CD8-positive, alpha-beta T cell (primary cell): ENCODE measurements at regions of chr1 and their contacts with region 1.

Region 1: DNA sequence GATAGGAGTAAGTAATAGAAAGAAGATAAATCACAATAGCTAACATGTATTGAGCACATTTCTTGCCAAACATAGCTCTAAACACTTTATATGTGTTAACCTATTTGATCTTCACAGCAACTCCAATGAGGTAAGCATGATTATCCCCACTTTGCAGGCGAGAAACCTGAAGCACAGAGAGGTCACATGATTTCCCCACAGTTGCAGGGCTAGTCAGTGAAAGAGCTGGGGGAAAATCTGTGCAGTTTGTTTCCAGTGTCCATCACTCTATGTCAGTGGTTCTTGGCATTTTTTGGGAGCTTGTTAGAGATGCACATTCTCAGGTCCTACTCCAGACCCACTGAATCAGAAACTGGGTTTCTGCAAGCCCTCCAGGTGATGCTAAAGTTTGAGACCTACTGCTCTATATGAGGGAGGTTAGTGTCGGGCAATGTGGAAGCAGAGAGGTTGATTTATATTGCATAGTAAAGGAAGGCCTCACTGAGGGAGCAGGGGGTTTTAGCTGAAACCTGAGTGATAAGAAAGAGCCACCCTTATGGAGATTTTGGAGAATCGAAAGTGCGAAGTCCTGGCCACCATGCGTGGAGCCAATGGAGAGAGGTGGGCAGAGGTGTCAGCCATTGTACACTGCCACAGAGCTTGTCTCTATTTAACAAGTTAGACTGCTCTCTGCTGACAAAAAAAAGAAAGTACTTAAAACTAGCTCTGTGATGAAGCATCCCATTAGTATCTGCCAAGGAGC is 20.9 kb downstream of the MCOLN3 start:
- DNase-seq: peak in 6 of 9 experiments; percentile 21 to 80 (median 52)
- ATAC-seq: peak; percentile 92
- H3K4me3 ChIP-seq: peak overlapping the region; percentile 10 to 42
- H3K4me3 Mint-ChIP-seq: peak overlapping the region; percentile 74
- H3K27ac ChIP-seq: peak overlapping the region in 1 of 2 experiments; percentile 60
- H3K27ac Mint-ChIP-seq: peak overlapping the region; percentile 86
- H3K4me1 ChIP-seq: peaks cover 8% of the 10 kb centered on the region
- H3K4me1 Mint-ChIP-seq: peaks cover 10% of the 10 kb centered on the region
- H3K27me3 ChIP-seq: no peaks in the 10 kb centered on the region
- H3K27me3 Mint-ChIP-seq: no peaks in the 10 kb centered on the region
- CTCF ChIP-seq: peak; percentile 30

Region 2: GRCh38 chr1:84425150-84425896 is 602.1 kb before region 1 on chr1:
- CTCF ChIA-PET with region 1: no interaction called
- POLR2A ChIA-PET with region 1: no interaction called
- intact Hi-C with region 1: no loop called
- DNase-seq: no peak
- ATAC-seq: no peak
- H3K4me3 ChIP-seq: no peak overlapping the region
- H3K4me3 Mint-ChIP-seq: no peak overlapping the region
- H3K27ac ChIP-seq: no peak overlapping the region
- H3K27ac Mint-ChIP-seq: no peak overlapping the region
- H3K4me1 ChIP-seq: no peaks in the 10 kb centered on the region
- H3K4me1 Mint-ChIP-seq: no peaks in the 10 kb centered on the region
- H3K27me3 ChIP-seq: no peaks in the 10 kb centered on the region
- H3K27me3 Mint-ChIP-seq: peaks cover under 1% of the 10 kb centered on the region
- CTCF ChIP-seq: no peak

Region 3: DNA sequence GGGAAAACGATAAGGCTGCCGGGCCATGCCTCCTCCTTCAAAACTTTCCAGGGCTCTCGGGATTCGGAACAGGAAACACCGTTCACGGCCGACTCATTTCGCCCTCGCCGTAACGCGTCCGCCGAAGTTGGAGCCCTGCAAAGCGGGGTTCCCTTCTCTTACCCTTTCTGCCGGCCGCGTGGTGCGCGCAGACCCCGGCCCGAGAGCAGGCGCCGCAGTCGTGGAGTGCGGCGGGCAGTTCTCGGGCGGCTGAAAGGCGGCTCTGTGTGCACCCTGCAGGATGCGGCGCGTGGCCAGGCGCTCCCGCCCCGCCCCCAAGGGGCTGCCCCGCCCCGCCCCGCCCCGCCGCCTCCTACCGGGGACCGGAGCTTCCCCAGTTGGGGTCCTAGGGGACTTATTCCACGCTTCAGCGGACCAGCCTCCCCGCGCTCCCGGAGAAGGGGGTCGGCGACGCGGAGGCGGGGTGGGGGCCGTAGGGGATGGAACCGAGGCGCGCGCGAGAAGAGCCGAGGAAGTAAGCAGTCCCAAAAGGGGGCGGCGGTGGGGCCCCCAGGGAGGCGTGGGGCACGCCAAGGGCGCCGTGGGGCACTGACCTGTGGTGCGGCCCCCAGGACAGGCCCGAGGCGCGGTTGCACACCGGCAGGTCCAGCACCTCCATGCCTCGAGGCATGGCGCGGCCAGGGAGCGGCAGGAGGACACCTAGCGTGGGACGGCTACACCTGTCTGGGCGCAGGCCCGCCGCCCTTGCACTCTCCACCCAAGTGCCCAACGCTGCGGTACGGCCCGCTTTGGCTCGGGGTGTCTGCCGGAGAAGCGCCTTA is 30.4 kb before region 1 on chr1 and contains the start of gene MCOLN2:
- CTCF ChIA-PET with region 1: interaction called, 10 read pairs
- POLR2A ChIA-PET with region 1: interaction called, 3 read pairs
- intact Hi-C with region 1: loop called in 1 of 2 experiments (anchors 1 kb)
- DNase-seq: peak; percentile 16 to 77 (median 51)
- ATAC-seq: peak; percentile 69
- H3K4me3 ChIP-seq: peak within 1 kb of the TSS; percentile 66 to 84
- H3K4me3 Mint-ChIP-seq: peak within 1 kb of the TSS; percentile 84
- H3K27ac ChIP-seq: peak within 1 kb of the TSS; percentile 28 to 81
- H3K27ac Mint-ChIP-seq: peak within 1 kb of the TSS; percentile 57
- H3K4me1 ChIP-seq: peaks cover 20% of the 10 kb centered on the region
- H3K4me1 Mint-ChIP-seq: peaks cover 34% of the 10 kb centered on the region
- H3K27me3 ChIP-seq: no peaks in the 10 kb centered on the region
- H3K27me3 Mint-ChIP-seq: peaks cover 23% of the 10 kb centered on the region
- CTCF ChIP-seq: no peak
- total RNA-seq, gene MCOLN2: 12.7 to 23.1 TPM